ENCODE measurements at regions of chr4 and their contacts with region 1.

Region 1: DNA sequence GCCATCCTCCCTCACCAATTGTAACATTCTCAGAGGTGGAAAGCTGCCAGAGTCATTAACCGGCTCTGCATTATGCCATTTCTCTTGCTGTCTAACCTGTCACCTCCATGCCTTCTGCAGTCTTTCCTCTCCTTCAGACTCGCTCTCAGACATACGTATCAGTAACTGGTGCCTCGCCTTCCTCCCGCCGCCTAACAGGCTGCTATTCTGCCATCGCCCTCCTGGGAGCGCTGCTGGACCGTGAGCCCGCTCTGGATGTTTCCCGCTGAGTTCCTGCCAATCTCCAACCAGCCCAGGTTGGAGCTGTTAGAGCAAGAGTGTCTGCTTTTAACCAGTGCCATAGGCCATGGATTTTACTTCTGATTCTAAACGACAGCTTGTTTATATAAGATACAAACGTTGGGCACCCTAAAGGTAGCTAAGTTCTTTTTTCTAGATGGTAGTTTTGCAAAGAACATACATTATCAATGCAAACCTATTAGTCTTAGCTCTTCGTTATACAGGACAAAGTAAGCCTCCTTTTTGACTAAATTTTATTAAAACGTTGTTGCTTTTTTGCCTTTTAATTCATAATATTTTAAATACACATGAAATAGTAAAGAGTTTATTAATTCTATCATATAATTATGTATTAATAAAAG is 59.5 kb upstream of the NEIL3 start:
- DNase-seq: peak; percentile 60
- ATAC-seq: peak; percentile 96
- H3K4me3 ChIP-seq: no peak overlapping the region
- H3K27ac ChIP-seq: no peak overlapping the region
- H3K4me1 ChIP-seq: no peaks in the 10 kb centered on the region; the same call in 1 of the 2 replicates
- H3K27me3 ChIP-seq: no peaks in the 10 kb centered on the region
- CTCF ChIP-seq: peak; percentile 93
- POLR2A ChIP-seq: no peak; the same call in 1 of the 2 replicates
- RAD21 ChIP-seq: peak; percentile 98

Region 2: GRCh38 chr4:176575141-176575730 is 674.9 kb before region 1 on chr4:
- CTCF ChIA-PET with region 1: no interaction called
- POLR2A ChIA-PET with region 1: no interaction called
- dilution Hi-C with region 1: no loop called
- in situ Hi-C with region 1: no loop called
- intact Hi-C with region 1: loop called (anchors 10 kb)
- DNase-seq: peak; percentile 28
- ATAC-seq: peak; percentile 40; the same call in 1 of the 2 replicates
- H3K4me3 ChIP-seq: no peak overlapping the region
- H3K27ac ChIP-seq: no peak overlapping the region; the same call in 1 of the 2 replicates
- H3K4me1 ChIP-seq: no peaks in the 10 kb centered on the region
- H3K27me3 ChIP-seq: peaks cover 3% of the 10 kb centered on the region; the same call in 1 of the 2 replicates
- CTCF ChIP-seq: no peak
- POLR2A ChIP-seq: no peak
- RAD21 ChIP-seq: no peak

Region 3: GRCh38 chr4:177108708-177109107 is 141.5 kb before region 1 on chr4:
- CTCF ChIA-PET with region 1: interaction called, 6 read pairs
- POLR2A ChIA-PET with region 1: no interaction called
- dilution Hi-C with region 1: no loop called
- in situ Hi-C with region 1: no loop called
- intact Hi-C with region 1: loop called (anchors 1 kb)
- DNase-seq: peak; percentile 68
- ATAC-seq: peak; percentile 99
- H3K4me3 ChIP-seq: no peak overlapping the region
- H3K27ac ChIP-seq: no peak overlapping the region
- H3K4me1 ChIP-seq: no peaks in the 10 kb centered on the region
- H3K27me3 ChIP-seq: no peaks in the 10 kb centered on the region
- CTCF ChIP-seq: peak; percentile 76
- POLR2A ChIP-seq: no peak
- RAD21 ChIP-seq: peak; percentile 79

Region 4: GRCh38 chr4:177339477-177340374 is 89.5 kb after region 1 on chr4:
- CTCF ChIA-PET with region 1: interaction called, 16 read pairs
- POLR2A ChIA-PET with region 1: no interaction called
- dilution Hi-C with region 1: no loop called
- in situ Hi-C with region 1: loop called (anchors 5 kb)
- intact Hi-C with region 1: loop called (anchors 1 kb)
- DNase-seq: peak; percentile 51
- ATAC-seq: peak; percentile 84
- H3K4me3 ChIP-seq: no peak overlapping the region
- H3K27ac ChIP-seq: no peak overlapping the region; the same call in 1 of the 2 replicates
- H3K4me1 ChIP-seq: peaks cover 2% of the 10 kb centered on the region; the same call in 1 of the 2 replicates
- H3K27me3 ChIP-seq: no peaks in the 10 kb centered on the region
- CTCF ChIP-seq: peak; percentile 79
- POLR2A ChIP-seq: no peak
- RAD21 ChIP-seq: peak; percentile 80

Region 5: GRCh38 chr4:177555007-177555574 is 304.9 kb after region 1 on chr4:
- CTCF ChIA-PET with region 1: no interaction called
- POLR2A ChIA-PET with region 1: no interaction called
- dilution Hi-C with region 1: no loop called
- in situ Hi-C with region 1: no loop called
- intact Hi-C with region 1: loop called (anchors 2 kb)
- DNase-seq: peak; percentile 50
- ATAC-seq: peak; percentile 68
- H3K4me3 ChIP-seq: no peak overlapping the region
- H3K27ac ChIP-seq: no peak overlapping the region
- H3K4me1 ChIP-seq: no peaks in the 10 kb centered on the region
- H3K27me3 ChIP-seq: no peaks in the 10 kb centered on the region
- CTCF ChIP-seq: peak; percentile 76
- POLR2A ChIP-seq: no peak
- RAD21 ChIP-seq: peak; percentile 85